ENCODE measurements at regions of chr12 and their contacts with region 1.

Region 1: GRCh38 chr12:107131832-107132616 is 38.7 kb upstream of the CRY1 start:
- DNase-seq: peak; percentile 10 to 15
- H3K4me3 ChIP-seq: no peak overlapping the region
- H3K27ac ChIP-seq: peak overlapping the region; percentile 48 to 76 (median 66)
- H3K4me1 ChIP-seq: peaks cover 3 to 17% of the 10 kb centered on the region in 2 donors
- H3K27me3 ChIP-seq: no peaks in the 10 kb centered on the region
- CTCF ChIP-seq: peak; percentile 37 to 93 (median 76)
- POLR2A ChIP-seq: no peak

Region 2: GRCh38 chr12:107317751-107318613 is 186.0 kb after region 1 on chr12:
- intact Hi-C with region 1: loop called (anchors 10 kb)
- DNase-seq: peak; percentile 97 to 98
- H3K4me3 ChIP-seq: peak overlapping the region; percentile 51 to 76 (median 74)
- H3K27ac ChIP-seq: peak overlapping the region; percentile 53 to 75 (median 66)
- H3K4me1 ChIP-seq: peaks cover 8 to 12% of the 10 kb centered on the region in 2 donors
- H3K27me3 ChIP-seq: no peaks in the 10 kb centered on the region
- CTCF ChIP-seq: peak in 4 of 6 experiments; percentile 34 to 52 (median 38)
- POLR2A ChIP-seq: peak; percentile 49 to 98

Region 3: DNA sequence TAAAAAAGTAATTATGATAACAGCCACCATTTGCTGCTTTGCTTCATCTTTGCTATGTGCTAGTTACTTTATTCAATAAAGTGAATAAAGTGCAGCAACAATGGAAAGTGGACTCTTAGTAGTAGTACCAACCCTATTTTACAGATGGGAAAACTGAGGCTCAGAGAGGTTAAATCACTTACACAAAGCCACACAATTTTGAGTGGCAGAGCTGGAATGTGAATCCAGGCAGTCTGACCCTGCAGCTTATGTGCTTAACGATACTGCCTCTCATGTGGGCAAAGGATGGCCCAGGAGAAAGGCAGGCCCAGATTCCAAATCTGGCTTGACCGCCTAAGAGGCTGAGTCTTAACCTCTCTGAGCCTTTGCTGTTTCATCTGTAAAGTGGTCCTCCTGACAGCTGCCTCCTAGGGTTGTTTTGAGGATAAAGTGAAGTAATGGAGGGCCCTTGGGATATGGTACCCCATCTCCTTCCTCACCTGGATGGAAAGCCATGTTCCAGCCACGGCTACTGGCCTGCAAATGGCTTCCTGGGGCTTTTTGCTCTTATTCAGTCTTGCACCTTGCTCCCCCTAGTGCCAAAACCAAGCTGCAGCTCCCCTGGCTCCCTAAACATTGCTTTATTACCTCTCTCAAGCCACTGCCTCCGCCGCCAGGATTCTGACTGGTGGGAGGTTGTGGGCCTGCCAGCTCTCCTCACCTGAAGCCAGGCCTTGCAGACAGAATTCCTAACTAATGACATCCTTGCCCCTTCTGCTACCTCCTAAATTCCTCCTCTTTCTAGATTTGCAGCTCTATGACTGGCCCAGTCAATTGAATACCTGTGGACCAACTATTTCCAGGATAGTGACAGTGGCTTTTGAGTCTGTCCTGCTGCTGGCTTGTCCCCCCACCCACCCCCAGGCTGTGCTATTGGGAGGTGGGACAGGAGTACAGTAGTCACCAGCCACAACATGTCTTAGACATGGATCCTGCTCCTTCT is 270.3 kb after region 1 on chr12:
- intact Hi-C with region 1: loop called (anchors 5 kb)
- DNase-seq: peak; percentile 52 to 57
- H3K4me3 ChIP-seq: no peak overlapping the region
- H3K27ac ChIP-seq: no peak overlapping the region
- H3K4me1 ChIP-seq: peaks cover 20 to 33% of the 10 kb centered on the region in 2 donors
- H3K27me3 ChIP-seq: no peaks in the 10 kb centered on the region
- CTCF ChIP-seq: peak in 4 of 6 experiments; percentile 39 to 55 (median 50)
- POLR2A ChIP-seq: no peak

Region 4: DNA sequence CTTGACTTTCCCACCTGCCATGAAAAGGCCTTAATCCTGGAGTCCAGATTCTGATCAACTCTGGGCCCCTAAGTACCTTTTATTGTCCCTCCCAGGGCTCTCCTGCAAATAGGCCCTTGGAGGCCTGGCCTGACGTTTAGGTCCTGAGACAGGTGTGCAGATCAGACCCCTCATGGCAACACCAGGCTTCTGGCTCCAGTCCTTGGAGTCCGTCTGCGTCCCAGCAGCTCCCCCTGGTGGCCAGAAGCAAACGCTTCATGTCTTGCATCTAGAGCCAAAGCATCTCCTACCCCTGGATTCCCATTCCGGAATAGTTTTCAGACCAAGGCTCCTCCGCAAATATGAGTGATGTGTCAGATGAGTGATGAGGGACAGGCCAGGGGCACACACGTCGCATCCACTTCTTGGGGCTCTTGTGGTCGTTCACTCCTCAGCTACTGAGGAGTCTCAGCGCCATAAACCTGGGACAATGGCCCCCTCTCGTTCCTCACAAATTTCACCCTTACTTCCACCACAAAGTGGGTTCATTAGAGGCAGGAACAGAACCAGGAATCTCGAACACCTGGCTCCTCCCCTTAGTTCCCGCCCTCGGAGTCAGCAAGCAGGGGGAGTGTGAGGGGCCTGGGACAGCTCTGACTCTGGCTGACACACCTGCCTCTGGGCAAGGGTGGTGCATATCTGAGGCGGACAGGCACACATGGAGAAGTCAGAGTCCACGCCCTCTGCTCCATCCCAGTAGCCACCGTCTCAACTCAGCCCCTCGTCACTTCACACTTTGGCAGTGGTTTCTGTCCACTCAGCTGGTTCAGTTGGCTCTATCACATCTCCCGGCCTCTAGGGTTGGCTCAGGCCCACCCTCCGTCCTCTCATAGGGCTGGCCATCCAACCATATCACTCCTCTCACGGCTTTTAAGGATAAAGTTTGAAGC is 475.7 kb after region 1 on chr12:
- intact Hi-C with region 1: loop called (anchors 5 kb)
- DNase-seq: peak; percentile 88 to 93
- H3K4me3 ChIP-seq: no peak overlapping the region
- H3K27ac ChIP-seq: peak overlapping the region; percentile 78 to 96 (median 88)
- H3K4me1 ChIP-seq: peaks cover 10 to 14% of the 10 kb centered on the region in 2 donors
- H3K27me3 ChIP-seq: no peaks in the 10 kb centered on the region
- CTCF ChIP-seq: peak; percentile 88 to 95 (median 91)
- POLR2A ChIP-seq: peak in 1 of 2 donors; percentile 78

Region 5: DNA sequence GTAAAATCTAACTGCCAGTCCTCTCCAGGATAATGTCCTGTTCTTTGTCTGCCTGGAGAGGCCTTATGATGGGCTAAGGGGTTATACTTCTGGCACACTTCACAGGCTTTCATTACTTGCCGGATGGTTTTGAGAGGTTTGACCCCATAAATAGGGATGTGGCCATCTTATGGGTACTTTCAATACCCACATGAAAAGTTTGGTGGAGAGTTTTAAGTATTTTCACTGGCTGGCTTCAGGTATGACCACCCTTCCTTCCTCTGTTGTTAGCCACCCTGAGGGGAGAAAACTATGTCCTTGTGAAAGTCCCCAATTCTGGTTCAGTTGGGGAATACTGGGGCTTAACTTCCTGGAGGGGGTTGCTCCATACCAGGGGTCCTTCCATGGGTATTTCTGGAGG is 697.2 kb after region 1 on chr12:
- intact Hi-C with region 1: no loop called
- DNase-seq: no peak
- H3K4me3 ChIP-seq: no peak overlapping the region
- H3K27ac ChIP-seq: no peak overlapping the region
- H3K4me1 ChIP-seq: no peaks in the 10 kb centered on the region
- H3K27me3 ChIP-seq: no peaks in the 10 kb centered on the region
- CTCF ChIP-seq: no peak
- POLR2A ChIP-seq: no peak